ENCODE measurements at regions of chr2 and their contacts with region 1.

Region 1: DNA sequence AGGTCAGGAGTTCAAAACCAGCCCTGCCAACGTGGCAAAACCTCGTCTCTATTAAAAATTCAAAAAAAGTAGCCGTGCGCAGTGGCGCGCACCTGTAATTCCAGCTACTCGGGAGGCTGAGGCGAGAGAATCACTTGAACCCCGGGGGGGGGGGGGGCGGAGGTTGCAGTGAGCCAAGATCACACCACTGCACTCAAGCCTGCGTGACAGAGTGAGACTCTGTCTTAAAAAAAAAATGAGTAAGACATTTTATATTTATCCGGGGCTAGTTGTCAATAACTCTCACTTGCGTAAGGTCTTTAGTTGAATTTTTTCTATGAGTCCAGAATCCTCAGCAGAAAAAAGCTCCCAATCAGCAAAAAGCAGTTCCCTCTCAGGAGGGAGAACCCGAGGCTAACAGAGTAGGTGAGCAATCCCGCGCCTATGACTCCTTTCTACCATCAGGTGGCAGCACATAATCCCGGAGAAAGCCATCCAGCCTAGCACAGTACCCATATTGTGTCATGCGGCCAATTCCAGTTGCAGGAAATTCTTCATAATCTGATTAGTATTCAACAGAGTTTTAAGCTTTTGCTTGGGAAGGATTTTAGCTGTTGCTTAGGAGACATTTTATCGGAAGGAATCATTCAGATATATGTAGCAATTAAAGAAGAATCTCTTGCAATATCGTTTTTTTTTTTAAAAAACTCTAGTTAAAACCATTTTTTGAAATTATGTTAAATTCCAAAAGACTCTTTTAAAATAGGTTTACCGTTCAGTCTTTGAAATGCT is 11.9 kb upstream of the CRYGA start:
- DNase-seq: peak; percentile 76
- ATAC-seq: peak; percentile 100
- H3K4me3 Mint-ChIP-seq: no peak overlapping the region
- H3K27ac Mint-ChIP-seq: no peak overlapping the region
- H3K4me1 Mint-ChIP-seq: peaks cover 4% of the 10 kb centered on the region
- H3K27me3 Mint-ChIP-seq: peaks cover 5% of the 10 kb centered on the region
- CTCF ChIP-seq: peak; percentile 82

Region 2: GRCh38 chr2:208164951-208165755 is 10.1 kb before region 1 on chr2:
- CTCF ChIA-PET with region 1: interaction called, 15 read pairs
- POLR2A ChIA-PET with region 1: no interaction called
- intact Hi-C with region 1: no loop called
- DNase-seq: no peak
- ATAC-seq: no peak
- H3K4me3 Mint-ChIP-seq: no peak overlapping the region
- H3K27ac Mint-ChIP-seq: no peak overlapping the region
- H3K4me1 Mint-ChIP-seq: no peaks in the 10 kb centered on the region
- H3K27me3 Mint-ChIP-seq: peaks cover 8% of the 10 kb centered on the region
- CTCF ChIP-seq: no peak

Region 3: GRCh38 chr2:208210688-208211451 is 35.6 kb after region 1 on chr2:
- CTCF ChIA-PET with region 1: interaction called, 13 read pairs
- POLR2A ChIA-PET with region 1: no interaction called
- intact Hi-C with region 1: no loop called
- DNase-seq: no peak
- ATAC-seq: no peak
- H3K4me3 Mint-ChIP-seq: no peak overlapping the region
- H3K27ac Mint-ChIP-seq: no peak overlapping the region
- H3K4me1 Mint-ChIP-seq: no peaks in the 10 kb centered on the region
- H3K27me3 Mint-ChIP-seq: no peaks in the 10 kb centered on the region
- CTCF ChIP-seq: no peak

Region 4: DNA sequence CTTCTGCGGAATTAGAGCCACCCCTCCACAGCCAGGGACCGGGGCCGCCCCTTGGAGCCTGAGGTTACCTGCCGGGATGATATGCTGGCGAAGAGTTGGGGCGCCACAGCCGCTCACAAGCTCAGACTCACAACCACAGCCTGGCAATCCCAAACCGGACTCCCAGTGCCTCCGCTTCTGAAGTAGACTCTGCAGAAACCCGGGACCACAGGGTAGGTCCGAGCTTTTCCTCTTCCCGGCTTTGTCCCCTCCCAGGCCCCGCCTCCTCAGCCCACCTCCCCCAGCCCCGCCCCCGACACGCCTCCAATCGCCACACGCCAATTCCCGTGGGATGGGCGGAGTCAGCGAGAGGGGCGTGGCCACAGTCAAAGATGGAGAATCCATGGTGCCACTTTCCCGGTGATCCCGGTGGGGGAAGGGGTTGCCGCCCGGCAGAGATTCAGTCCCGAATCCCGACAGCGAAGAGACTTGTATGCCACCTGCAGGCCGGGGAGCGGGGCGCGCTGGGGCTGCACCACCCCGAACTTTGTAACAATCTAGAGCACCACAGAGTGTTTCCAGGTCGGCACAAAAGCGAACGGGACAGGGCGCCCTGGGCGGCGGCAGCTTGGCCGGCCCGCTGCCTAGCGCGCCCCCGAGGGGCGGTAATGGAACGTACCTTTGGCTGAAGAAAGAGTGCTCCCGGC is 79.8 kb after region 1 on chr2 and contains the start of gene IDH1:
- CTCF ChIA-PET with region 1: interaction called, 62 read pairs
- POLR2A ChIA-PET with region 1: no interaction called
- intact Hi-C with region 1: loop called (anchors 2 kb)
- DNase-seq: peak; percentile 96
- ATAC-seq: peak; percentile 85
- H3K4me3 Mint-ChIP-seq: peak within 1 kb of the TSS; percentile 95
- H3K27ac Mint-ChIP-seq: peak within 1 kb of the TSS; percentile 79
- H3K4me1 Mint-ChIP-seq: peaks cover 20% of the 10 kb centered on the region
- H3K27me3 Mint-ChIP-seq: no peaks in the 10 kb centered on the region
- CTCF ChIP-seq: no peak
- total RNA-seq, gene IDH1: 19.0 to 19.7 TPM

Region 5: DNA sequence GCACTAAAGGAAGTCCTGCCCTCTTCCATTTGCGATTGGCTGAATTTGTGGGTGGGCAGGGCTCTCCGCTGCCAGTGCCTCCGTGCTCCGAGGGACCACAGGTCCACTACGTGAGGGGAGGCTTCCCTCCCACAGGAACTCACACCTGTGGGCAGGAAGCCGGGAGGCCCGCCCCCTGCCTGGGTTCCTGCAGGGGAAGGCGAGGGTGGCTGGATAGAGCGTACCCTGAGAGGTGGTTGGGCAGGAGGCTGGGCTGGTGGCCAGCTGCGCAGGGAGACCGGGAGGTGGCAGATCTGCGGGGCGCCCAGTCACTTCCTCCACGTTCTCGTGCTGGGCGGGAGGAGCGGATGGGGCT is 184.4 kb after region 1 on chr2:
- CTCF ChIA-PET with region 1: no interaction called
- POLR2A ChIA-PET with region 1: no interaction called
- intact Hi-C with region 1: loop called (anchors 10 kb)
- DNase-seq: no peak
- ATAC-seq: peak; percentile 27
- H3K4me3 Mint-ChIP-seq: no peak overlapping the region
- H3K27ac Mint-ChIP-seq: no peak overlapping the region
- H3K4me1 Mint-ChIP-seq: peaks cover 4% of the 10 kb centered on the region
- H3K27me3 Mint-ChIP-seq: no peaks in the 10 kb centered on the region
- CTCF ChIP-seq: no peak